Activated CD4-positive, alpha-beta T cell treated with anti-CD3 and anti-CD28 coated beads for 36 hours (primary cell): ENCODE measurements at regions of chr1 and their contacts with region 1.

Region 1: GRCh38 chr1:44884746-44885145 is 41.7 kb upstream of the PTCH2 start:
- DNase-seq: no peak
- ATAC-seq: no peak
- H3K4me3 Mint-ChIP-seq: no peak overlapping the region
- H3K27ac Mint-ChIP-seq: no peak overlapping the region
- H3K4me1 Mint-ChIP-seq: no peaks in the 10 kb centered on the region
- H3K27me3 Mint-ChIP-seq: no peaks in the 10 kb centered on the region

Region 2: DNA sequence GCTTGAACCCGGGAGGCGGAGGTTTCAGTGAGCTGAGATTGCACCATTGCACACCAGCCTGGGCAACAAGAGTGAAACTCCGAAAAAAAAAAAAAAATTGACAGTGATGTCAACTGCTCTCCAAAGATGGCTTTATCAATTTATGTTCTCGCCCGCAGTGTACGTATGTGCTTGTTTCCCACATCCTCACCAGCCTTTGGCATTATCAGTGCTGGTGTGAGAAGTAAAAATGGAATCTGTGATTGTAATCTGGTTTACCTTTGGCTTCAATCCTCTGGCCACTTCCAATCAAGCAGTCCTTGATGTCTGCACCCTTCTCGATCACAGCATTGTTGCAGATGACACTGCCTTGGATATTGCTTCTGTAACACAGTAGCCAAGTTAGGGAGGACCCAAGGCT is 27.3 kb before region 1 on chr1:
- CTCF ChIA-PET with region 1: interaction called, 3 read pairs
- POLR2A ChIA-PET with region 1: no interaction called
- intact Hi-C with region 1: loop called in 1 of 2 experiments (anchors 1 kb)
- DNase-seq: no peak
- ATAC-seq: no peak
- H3K4me3 Mint-ChIP-seq: no peak overlapping the region
- H3K27ac Mint-ChIP-seq: no peak overlapping the region
- H3K4me1 Mint-ChIP-seq: no peaks in the 10 kb centered on the region
- H3K27me3 Mint-ChIP-seq: no peaks in the 10 kb centered on the region